Transverse colon (tissue), 4 donors: ENCODE measurements at regions of chr19 and their contacts with region 1.

Region 1: DNA sequence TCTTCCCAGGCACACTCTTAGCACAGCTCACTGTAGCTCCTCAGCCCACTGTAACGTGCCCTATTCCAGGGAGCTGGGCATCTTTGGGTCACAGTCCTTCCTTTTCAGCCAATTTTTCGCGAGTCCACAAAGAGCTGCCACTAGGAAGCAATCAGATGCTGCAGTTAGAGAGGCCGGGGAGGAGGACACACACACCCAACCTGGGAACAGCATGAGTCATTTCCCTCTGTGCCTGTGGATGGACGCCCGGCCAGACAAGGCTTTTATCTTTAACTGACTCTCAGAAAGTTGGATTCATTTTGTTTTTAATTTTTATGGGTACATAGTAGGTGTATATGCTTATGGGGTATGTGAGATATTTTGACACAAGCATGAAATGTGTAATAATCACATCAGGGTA is 918.6 kb downstream of the UQCRFS1 start:
- DNase-seq: peak; percentile 21
- H3K4me3 ChIP-seq: no peak overlapping the region
- H3K27ac ChIP-seq: no peak overlapping the region
- H3K4me1 ChIP-seq: peaks cover 0 to 16% (median 6%) of the 10 kb centered on the region in 4 donors
- H3K27me3 ChIP-seq: no peaks in the 10 kb centered on the region
- CTCF ChIP-seq: no peak
- EP300 ChIP-seq: no peak
- POLR2A ChIP-seq: no peak

Region 2: GRCh38 chr19:28257396-28257795 is 37.0 kb before region 1 on chr19:
- in situ Hi-C with region 1: no loop called
- intact Hi-C with region 1: loop called (anchors 1 kb)
- DNase-seq: no peak
- H3K4me3 ChIP-seq: no peak overlapping the region
- H3K27ac ChIP-seq: no peak overlapping the region
- H3K4me1 ChIP-seq: no peaks in the 10 kb centered on the region
- H3K27me3 ChIP-seq: no peaks in the 10 kb centered on the region
- CTCF ChIP-seq: no peak
- EP300 ChIP-seq: no peak
- POLR2A ChIP-seq: no peak